BJ (cell line): ENCODE measurements at regions of chr2 and their contacts with region 1.

Region 1: GRCh38 chr2:158745044-158745865 is 49.9 kb upstream of the DAPL1 start:
- DNase-seq: no peak
- H3K4me3 ChIP-seq: no peak overlapping the region
- H3K27me3 ChIP-seq: no peaks in the 10 kb centered on the region
- CTCF ChIP-seq: peak; percentile 58

Region 2: DNA sequence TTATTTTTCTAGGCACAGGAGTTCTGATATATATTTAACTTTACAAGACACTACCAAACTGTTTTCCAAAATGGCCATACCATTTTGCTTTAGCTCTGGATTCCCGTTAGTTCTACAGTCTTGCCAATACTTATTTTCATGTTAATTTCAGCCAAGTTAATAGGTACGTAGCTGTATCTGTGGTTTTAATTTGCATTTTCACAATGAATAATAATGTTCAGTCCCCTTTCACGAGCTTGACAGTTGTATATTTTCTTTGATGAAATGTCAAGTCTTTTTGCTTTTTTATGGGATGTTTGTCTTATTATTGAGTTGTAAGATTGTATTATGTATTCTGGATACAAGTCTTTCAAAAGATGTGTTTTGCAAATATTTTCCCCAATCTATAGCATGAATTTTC is 1538.3 kb before region 1 on chr2:
- CTCF ChIA-PET with region 1: no interaction called
- POLR2A ChIA-PET with region 1: no interaction called
- DNase-seq: no peak
- H3K4me3 ChIP-seq: no peak overlapping the region
- H3K27me3 ChIP-seq: no peaks in the 10 kb centered on the region
- CTCF ChIP-seq: no peak

Region 3: DNA sequence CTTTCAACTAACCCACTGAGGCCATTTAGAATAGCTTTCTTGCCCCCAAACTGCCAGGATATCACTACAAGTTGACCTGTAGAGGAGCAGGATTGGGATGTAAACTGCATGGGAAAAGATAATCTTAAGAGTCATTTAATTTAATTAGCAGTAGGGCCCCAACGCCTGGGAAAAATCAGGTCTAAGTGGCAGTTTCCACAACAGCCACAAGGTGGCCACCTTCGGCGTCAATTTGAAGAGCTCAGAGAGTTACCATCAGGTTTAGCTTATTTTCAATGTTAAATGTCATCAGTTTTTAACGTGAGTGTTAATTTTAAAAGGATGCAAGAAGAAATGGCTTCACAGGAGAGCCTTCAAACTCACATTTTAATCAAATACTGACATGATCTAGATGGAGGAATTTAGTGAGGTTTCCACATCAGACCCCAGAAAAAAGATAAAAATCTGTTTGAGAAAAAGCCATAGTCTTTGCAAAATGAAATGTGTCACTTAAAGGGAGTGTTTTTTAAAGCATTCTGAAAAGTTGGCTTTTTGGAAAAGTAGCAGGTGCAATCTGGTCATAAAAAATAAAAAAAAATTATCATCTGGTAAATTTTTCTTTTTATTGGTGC is 720.9 kb before region 1 on chr2:
- CTCF ChIA-PET with region 1: interaction called, 71 read pairs
- POLR2A ChIA-PET with region 1: no interaction called
- DNase-seq: no peak
- H3K4me3 ChIP-seq: no peak overlapping the region
- H3K27me3 ChIP-seq: peaks cover 2% of the 10 kb centered on the region
- CTCF ChIP-seq: peak; percentile 80

Region 4: DNA sequence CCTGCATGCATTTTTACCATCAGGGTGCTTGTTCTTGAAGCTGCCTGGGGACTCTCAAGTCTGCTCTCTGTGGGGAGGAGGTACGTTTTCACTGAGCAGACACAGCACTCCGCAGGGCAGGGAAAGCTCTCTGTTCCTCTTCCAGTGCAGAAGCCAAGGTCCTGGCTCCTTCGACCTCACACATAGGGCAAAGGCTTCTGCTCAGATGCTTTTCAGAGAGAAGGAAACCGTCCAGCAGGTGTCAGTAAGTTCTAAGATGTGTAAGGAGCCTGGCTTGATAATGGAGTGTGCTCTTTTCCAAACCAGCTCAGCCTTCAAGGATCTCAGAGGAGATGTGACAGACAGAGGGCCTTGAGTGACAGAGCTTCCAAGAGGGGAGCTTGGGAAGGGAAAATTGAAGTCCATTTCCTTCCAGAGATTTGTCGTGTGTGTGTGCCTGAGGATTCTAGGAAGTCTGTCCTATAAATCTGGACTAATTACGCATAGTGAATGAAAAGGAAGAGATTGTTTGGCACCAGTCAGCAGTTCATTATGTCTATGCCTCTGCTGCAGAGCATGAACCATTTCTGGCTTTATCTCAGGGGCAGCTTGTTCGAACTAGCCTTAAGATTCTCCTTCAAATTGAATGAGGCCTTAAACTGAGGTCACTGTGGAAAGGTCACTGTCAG is 710.9 kb before region 1 on chr2:
- CTCF ChIA-PET with region 1: interaction called, 131 read pairs
- POLR2A ChIA-PET with region 1: no interaction called
- DNase-seq: no peak
- H3K4me3 ChIP-seq: no peak overlapping the region
- H3K27me3 ChIP-seq: no peaks in the 10 kb centered on the region; the same call in 1 of the 2 replicates
- CTCF ChIP-seq: peak; percentile 68

Region 5: DNA sequence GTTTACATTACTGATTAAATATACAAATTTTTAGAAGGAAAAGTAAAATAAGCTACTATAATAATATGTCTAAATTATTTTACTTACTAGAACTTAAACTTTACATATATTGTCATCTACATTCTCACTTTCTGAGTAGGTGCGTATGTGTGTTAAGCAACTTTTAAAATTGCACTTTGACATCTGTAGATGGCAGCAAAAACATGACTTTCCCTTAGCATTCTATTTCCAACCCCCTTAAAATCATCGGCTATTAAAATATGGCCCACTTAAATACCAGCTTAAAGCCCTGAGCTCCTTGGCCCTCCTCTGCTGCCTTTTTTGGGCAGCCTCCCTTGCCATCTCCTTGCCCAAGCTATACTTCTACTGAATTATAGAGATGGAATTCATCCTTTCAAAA is 565.6 kb before region 1 on chr2:
- CTCF ChIA-PET with region 1: interaction called, 36 read pairs
- POLR2A ChIA-PET with region 1: no interaction called
- DNase-seq: no peak
- H3K4me3 ChIP-seq: no peak overlapping the region
- H3K27me3 ChIP-seq: peaks cover 5% of the 10 kb centered on the region
- CTCF ChIP-seq: peak; percentile 37

Region 6: GRCh38 chr2:158456309-158457066 is 288.8 kb before region 1 on chr2 and contains the starts of genes CCDC148 and PKP4:
- CTCF ChIA-PET with region 1: interaction called, 16 read pairs
- POLR2A ChIA-PET with region 1: no interaction called
- DNase-seq: peak; percentile 55
- H3K4me3 ChIP-seq: peak within 1 kb of the TSS; percentile 97
- H3K27me3 ChIP-seq: no peaks in the 10 kb centered on the region
- CTCF ChIP-seq: peak; percentile 20; the same call in 1 of the 2 replicates
- polyA plus RNA-seq, gene CCDC148: 0.67 and 0.75 TPM in 2 replicates
- polyA plus RNA-seq, gene PKP4: 47.0 and 48.4 TPM in 2 replicates

Region 7: GRCh38 chr2:158795195-158795924 is 50.1 kb after region 1 on chr2 and contains the start of gene DAPL1:
- CTCF ChIA-PET with region 1: no interaction called
- POLR2A ChIA-PET with region 1: no interaction called
- DNase-seq: no peak
- H3K4me3 ChIP-seq: no peak within 1 kb of the TSS
- H3K27me3 ChIP-seq: peaks cover 8% of the 10 kb centered on the region
- CTCF ChIP-seq: no peak
- polyA plus RNA-seq, gene DAPL1: not detected in 2 replicates